ENCODE measurements at regions of chr1 and their contacts with region 1.

Region 1: GRCh38 chr1:229420765-229421164 is 13.1 kb downstream of the ACTA1 start:
- DNase-seq: no peak
- ATAC-seq: no peak
- H3K4me3 ChIP-seq: no peak overlapping the region
- H3K4me3 Mint-ChIP-seq: no peak overlapping the region
- H3K27ac ChIP-seq: no peak overlapping the region
- H3K27ac Mint-ChIP-seq: no peak overlapping the region
- H3K4me1 ChIP-seq: no peaks in the 10 kb centered on the region
- H3K4me1 Mint-ChIP-seq: no peaks in the 10 kb centered on the region
- H3K27me3 ChIP-seq: peaks cover 3 to 20% of the 10 kb centered on the region in 2 experiments
- H3K27me3 Mint-ChIP-seq: peaks cover 32 to 33% of the 10 kb centered on the region in 2 donors

Region 2: GRCh38 chr1:229287267-229287666 is 133.5 kb before region 1 on chr1:
- CTCF ChIA-PET with region 1: interaction called in 1 of 2 experiments, 11 read pairs
- POLR2A ChIA-PET with region 1: no interaction called
- DNase-seq: no peak
- ATAC-seq: no peak
- H3K4me3 ChIP-seq: no peak overlapping the region
- H3K4me3 Mint-ChIP-seq: no peak overlapping the region
- H3K27ac ChIP-seq: no peak overlapping the region
- H3K27ac Mint-ChIP-seq: no peak overlapping the region
- H3K4me1 ChIP-seq: peaks cover 0 to 2% of the 10 kb centered on the region in 2 experiments
- H3K4me1 Mint-ChIP-seq: peaks cover 41 to 43% (median 43%) of the 10 kb centered on the region in 3 donors
- H3K27me3 ChIP-seq: no peaks in the 10 kb centered on the region
- H3K27me3 Mint-ChIP-seq: no peaks in the 10 kb centered on the region